SK-N-SH (cell line): ENCODE measurements at regions of chr7 and their contacts with region 1.

Region 1: DNA sequence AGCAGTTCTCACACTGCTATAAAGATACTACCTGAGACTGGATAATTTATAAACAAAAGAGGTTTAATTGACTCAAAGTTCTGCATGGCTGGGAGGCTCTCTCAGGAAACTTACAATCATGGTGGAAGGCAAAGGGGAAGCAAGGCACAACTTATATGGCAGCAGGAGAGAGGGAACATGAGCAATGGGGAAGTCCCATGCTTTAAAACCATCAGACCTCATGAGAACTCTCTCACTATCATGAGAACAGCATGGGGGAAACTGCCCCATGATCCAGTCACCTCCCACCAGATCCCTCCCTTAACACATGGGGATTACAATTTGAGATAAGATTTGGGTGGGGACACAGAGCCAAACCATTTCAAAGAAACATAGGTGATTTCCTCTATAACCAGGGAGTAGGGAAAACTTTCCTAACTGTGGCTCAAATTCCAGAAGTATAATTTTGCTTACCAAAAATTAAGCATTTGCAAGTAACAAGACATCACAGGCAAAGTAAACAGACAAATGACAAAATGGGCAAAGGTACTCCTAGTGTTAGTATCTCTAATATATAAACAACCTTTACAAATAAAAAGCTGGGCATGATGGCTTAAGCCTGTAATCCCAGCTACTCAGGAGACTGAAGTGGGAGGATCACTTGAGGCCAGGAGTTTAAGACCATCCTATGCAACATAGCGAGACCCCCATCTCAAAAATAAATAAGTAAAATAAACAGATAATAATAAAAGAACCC is 88.0 kb downstream of the KBTBD2 start:
- DNase-seq: no peak
- H3K4me3 ChIP-seq: no peak overlapping the region
- H3K27ac ChIP-seq: no peak overlapping the region
- H3K4me1 ChIP-seq: no peaks in the 10 kb centered on the region; a peak in 1 of 4 replicates
- H3K27me3 ChIP-seq: no peaks in the 10 kb centered on the region
- CTCF ChIP-seq: no peak
- EP300 ChIP-seq: no peak
- RAD21 ChIP-seq: no peak

Region 2: DNA sequence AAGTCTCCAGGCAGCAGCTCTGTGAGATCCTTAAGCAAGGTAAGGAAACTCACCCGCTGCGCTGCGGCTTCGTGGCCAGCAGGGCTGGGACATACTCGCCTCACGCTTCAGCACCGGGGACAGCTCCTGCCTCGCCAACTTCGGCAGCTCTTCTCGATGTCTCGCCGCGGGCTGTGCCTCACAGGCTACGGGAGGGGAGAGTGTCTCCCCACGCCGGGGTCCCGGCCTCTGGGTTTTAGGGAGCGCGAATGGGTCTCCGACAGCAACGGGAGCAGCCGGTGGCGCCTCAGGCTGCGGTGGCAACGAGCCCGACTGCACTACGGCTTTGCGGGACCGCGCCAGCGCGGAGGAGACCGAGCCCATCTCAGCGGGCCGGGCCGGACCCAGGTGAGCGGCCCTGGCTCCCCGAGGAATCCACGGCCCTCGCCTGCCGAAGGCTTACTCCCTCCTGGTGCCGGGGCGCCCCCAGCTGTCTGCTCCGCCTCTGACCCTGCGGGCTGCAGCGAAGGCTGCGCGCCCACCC is 375.7 kb before region 1 on chr7:
- CTCF ChIA-PET with region 1: no interaction called
- POLR2A ChIA-PET with region 1: no interaction called
- DNase-seq: peak; percentile 70
- H3K4me3 ChIP-seq: peak overlapping the region in 1 of 2 experiments; percentile 40; a peak in 2 of 4 replicates
- H3K27ac ChIP-seq: no peak overlapping the region
- H3K4me1 ChIP-seq: no peaks in the 10 kb centered on the region; a peak in 1 of 4 replicates
- H3K27me3 ChIP-seq: peaks cover 20% of the 10 kb centered on the region; the same call in 1 of the 2 replicates
- CTCF ChIP-seq: peak; percentile 53
- EP300 ChIP-seq: no peak
- RAD21 ChIP-seq: no peak

Region 3: DNA sequence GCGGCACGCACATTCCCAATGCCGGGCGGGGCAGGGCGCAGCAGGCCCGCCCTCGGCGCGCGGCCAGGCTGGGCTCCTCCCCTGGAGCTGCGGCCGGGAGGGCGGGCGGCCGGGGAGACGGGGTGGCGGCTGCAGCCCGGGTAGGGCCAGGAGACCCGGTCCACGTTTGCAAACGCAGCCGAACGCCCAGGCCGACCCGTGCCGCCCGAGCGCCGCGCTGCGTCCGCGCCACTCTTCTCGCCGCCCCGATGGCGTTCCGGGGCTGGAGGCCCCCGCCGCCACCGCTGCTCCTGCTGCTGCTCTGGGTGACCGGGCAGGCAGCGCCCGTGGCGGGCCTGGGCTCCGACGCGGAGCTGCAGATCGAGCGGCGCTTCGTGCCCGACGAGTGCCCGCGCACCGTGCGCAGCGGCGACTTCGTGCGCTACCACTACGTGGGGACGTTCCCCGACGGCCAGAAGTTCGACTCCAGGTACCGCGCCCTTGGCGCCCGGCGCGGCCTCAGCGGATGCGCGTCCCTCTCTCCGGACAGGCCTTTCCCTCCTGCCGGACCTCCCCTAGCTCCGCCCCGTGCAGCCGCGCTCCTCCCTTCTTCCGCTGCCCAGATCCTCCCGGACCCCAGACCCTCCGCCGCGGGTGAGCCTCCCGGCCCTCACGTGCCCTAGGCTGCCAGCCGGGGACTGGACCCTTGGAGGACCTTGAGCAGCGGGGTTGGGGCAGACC is 153.9 kb after region 1 on chr7 and contains the start of gene FKBP9:
- CTCF ChIA-PET with region 1: interaction called, 12 read pairs
- POLR2A ChIA-PET with region 1: no interaction called
- DNase-seq: peak; percentile 99
- H3K4me3 ChIP-seq: peak within 1 kb of the TSS; percentile 81 to 89
- H3K27ac ChIP-seq: peak within 1 kb of the TSS; percentile 65 to 92
- H3K4me1 ChIP-seq: peaks cover 0 to 13% of the 10 kb centered on the region in 2 experiments; a peak in 1 of 4 replicates
- H3K27me3 ChIP-seq: no peaks in the 10 kb centered on the region
- CTCF ChIP-seq: no peak
- EP300 ChIP-seq: 0 out of 4 replicates have a peak, but pooled peaks of 1 of the 2 experiments have one; percentile 8
- RAD21 ChIP-seq: no peak
- polyA plus RNA-seq, gene FKBP9: 211 and 219 TPM in 2 replicates

Region 4: GRCh38 chr7:33050535-33051318 is 247.2 kb after region 1 on chr7:
- CTCF ChIA-PET with region 1: interaction called, 17 read pairs
- POLR2A ChIA-PET with region 1: no interaction called
- DNase-seq: peak; percentile 51
- H3K4me3 ChIP-seq: no peak overlapping the region
- H3K27ac ChIP-seq: no peak overlapping the region
- H3K4me1 ChIP-seq: peaks cover 3 to 4% of the 10 kb centered on the region in 2 experiments; a peak in 1 of 4 replicates
- H3K27me3 ChIP-seq: no peaks in the 10 kb centered on the region
- CTCF ChIP-seq: peak; percentile 92
- EP300 ChIP-seq: no peak
- RAD21 ChIP-seq: peak; percentile 82